Left lung (tissue), 14 donors: ENCODE measurements at regions of chr12 and their contacts with region 1.

Region 1: GRCh38 chr12:32659908-32660440 is 19.1 kb upstream of the DNM1L start:
- DNase-seq: no peak
- ATAC-seq: no peak
- H3K4me3 ChIP-seq: no peak overlapping the region
- H3K27ac ChIP-seq: no peak overlapping the region
- H3K4me1 ChIP-seq: no peaks in the 10 kb centered on the region
- H3K27me3 ChIP-seq: no peaks in the 10 kb centered on the region
- CTCF ChIP-seq: no peak

Region 2: DNA sequence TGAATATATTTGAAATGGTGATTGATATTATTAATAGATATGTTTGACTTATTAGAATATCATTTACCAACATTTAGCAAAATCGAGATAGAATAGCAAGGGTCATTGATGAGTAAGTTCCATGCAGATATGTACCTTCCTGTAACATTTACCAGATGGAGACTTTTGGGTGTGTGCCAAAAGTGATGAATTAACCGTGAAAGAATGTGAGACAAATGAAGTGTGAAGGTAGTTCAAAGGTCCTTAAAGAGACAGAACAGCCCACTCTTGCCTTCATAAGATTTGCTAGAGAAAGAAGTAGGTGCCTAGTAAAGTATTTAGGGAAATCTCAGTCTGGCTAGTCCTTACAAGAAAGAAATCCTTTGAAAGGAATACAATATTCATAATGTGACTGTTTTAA is 215.1 kb before region 1 on chr12:
- intact Hi-C with region 1: loop called in 1 of 2 experiments (anchors 5 kb)
- DNase-seq: no peak
- ATAC-seq: peak; percentile 62
- H3K4me3 ChIP-seq: no peak overlapping the region
- H3K27ac ChIP-seq: no peak overlapping the region
- H3K4me1 ChIP-seq: peaks cover 7 to 9% of the 10 kb centered on the region in 2 donors
- H3K27me3 ChIP-seq: no peaks in the 10 kb centered on the region
- CTCF ChIP-seq: no peak

Region 3: GRCh38 chr12:32618115-32618514 is 41.9 kb before region 1 on chr12:
- intact Hi-C with region 1: no loop called
- DNase-seq: no peak
- ATAC-seq: no peak
- H3K4me3 ChIP-seq: no peak overlapping the region
- H3K27ac ChIP-seq: no peak overlapping the region
- H3K4me1 ChIP-seq: no peaks in the 10 kb centered on the region
- H3K27me3 ChIP-seq: no peaks in the 10 kb centered on the region
- CTCF ChIP-seq: no peak